Heart left ventricle (tissue), 16 donors: ENCODE measurements at regions of chr1 and their contacts with region 1.

Region 1: DNA sequence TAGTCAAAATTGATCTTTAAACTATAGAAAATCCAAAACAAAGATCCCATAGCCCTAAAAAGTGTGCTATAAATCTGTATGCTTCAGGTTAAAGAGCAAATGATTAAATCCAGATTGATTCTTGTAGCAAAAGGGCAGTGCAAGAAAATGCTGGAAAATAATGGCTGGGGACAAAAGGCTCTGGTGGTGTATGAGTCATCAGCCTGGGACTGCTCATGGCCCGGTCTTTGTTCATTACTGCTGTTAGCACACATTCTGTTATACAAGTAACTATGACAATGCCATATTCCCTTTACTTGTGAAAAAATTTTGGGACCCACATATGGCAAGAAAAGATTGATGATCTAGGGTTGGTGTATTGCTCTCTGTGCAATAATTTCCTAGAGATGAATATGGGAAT is 89.1 kb downstream of the RWDD3 start:
- DNase-seq: no peak
- ATAC-seq: no peak
- H3K4me3 ChIP-seq: no peak overlapping the region
- H3K27ac ChIP-seq: no peak overlapping the region
- H3K4me1 ChIP-seq: peaks cover 0 to 8% (median 0%) of the 10 kb centered on the region in 12 donors
- H3K27me3 ChIP-seq: no peaks in the 10 kb centered on the region
- CTCF ChIP-seq: no peak
- POLR2A ChIP-seq: no peak

Region 2: DNA sequence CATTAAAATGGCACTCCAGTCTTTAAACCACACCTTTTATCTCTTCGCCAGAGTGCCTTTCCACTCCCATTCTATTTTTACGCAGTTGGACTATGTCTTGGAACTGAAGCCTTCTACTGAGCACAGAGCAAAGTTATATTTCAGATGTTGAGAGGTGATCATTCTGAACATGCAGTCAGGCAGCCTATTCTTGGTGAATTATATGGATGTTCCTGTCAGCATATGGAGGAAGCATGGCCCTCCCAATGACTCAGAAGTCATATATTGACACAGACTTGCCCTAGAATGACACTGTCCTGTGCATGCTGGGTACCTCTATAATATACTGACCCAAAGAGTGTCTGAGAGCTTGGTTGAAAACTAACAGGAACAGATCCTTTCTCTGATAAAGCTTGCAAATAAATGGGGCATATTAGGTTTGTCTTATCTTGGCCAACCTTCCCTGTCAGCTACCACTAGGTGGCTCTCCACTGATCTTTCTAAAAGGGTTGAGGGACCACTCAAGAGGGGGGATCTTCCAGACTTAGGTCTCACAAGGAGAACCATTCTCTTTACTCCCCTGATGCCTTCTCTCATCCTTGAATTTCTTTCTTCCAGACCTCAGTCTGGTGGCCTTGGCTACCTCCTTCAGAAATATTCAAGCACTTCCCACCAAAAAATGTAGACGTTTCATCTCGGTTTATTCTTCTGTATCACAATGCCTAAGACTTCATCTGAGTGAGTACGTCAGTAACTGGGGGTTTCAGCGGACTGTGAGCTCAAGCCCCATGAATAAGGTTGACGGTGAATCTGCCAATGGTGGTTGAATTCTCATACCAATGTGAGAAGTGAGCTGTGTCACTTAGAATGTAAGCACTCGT is 238.6 kb before region 1 on chr1:
- intact Hi-C with region 1: no loop called
- DNase-seq: no peak
- ATAC-seq: peak in 3 of 4 donors; percentile 9 to 65 (median 61)
- H3K4me3 ChIP-seq: no peak overlapping the region
- H3K27ac ChIP-seq: peak overlapping the region in 8 of 12 donors; percentile 28 to 83 (median 66)
- H3K4me1 ChIP-seq: peaks cover 0 to 32% (median 13%) of the 10 kb centered on the region in 12 donors
- H3K27me3 ChIP-seq: no peaks in the 10 kb centered on the region
- CTCF ChIP-seq: peak; percentile 35 to 63 (median 52)
- POLR2A ChIP-seq: no peak

Region 3: DNA sequence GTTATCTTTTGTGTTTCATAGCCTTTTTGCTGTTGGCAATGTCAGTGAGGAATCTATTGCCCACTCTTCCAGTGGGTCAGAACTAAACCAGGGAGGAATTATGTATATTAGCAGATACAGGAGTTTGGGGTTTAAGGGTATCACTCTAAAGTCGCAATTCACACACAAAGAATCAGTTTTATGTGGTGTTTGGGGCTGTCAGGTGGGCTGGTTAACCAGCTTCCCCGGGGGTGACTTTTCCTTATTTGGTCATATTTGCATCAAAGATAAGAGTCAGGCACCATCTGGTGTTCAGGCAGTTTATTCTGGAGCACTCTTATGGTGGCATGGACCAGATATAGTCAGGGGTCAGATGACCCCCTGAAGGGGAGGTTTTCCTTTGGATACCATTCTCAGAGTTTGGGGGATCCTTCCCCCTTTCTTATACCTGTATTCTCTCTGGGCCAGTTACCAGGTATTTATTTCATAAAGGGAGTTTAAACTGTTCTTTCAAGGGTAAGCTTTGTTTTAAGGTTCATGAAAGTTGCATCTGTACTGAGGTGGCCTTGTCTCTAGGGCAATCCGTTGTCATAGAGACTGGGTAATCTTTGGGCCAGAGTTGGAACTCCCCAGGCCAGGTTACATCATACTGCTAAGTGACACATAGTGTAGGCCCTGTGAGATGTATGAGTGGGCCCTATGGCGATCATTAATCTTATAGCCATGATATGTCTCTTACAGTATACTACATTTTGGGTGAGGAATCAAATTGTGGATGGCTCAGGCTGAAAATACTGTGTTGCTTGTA is 59.1 kb after region 1 on chr1:
- intact Hi-C with region 1: loop called in 1 of 10 experiments (anchors 2 kb)
- DNase-seq: no peak
- ATAC-seq: no peak
- H3K4me3 ChIP-seq: no peak overlapping the region
- H3K27ac ChIP-seq: no peak overlapping the region
- H3K4me1 ChIP-seq: no peaks in the 10 kb centered on the region
- H3K27me3 ChIP-seq: peaks cover 0 to 4% (median 0%) of the 10 kb centered on the region in 9 donors
- CTCF ChIP-seq: no peak
- POLR2A ChIP-seq: no peak